ENCODE measurements at regions of chr7 and their contacts with region 1.

Region 1: GRCh38 chr7:120272261-120272660 is 714 bp upstream of the KCND2 start:
- DNase-seq: peak; percentile 51
- H3K4me3 Mint-ChIP-seq: peak overlapping the region; percentile 43
- H3K27ac Mint-ChIP-seq: no peak overlapping the region
- H3K4me1 Mint-ChIP-seq: no peaks in the 10 kb centered on the region
- H3K27me3 Mint-ChIP-seq: peaks cover 72% of the 10 kb centered on the region
- CTCF ChIP-seq: peak; percentile 57

Region 2: DNA sequence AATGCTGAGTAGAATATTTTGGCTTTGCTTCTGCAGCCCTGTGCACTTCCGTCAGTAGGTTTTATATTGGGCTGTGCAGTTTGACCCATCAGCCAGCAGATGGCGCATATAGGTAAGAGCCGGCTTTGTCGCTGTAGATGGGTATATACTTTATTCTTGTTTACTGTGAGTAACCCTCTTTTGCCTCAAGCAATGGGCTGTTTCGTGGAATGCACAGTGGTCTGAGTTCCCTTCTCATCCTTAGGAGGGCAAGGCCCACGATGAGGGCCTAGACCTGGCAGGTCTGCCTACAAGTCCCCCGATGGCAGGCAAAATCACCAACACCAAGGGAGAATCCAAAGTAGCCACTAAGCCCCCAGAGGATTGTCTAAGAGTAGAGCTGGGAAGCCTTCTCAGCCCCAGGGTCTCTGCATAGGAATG is 1002.2 kb before region 1 on chr7:
- CTCF ChIA-PET with region 1: interaction called, 3 read pairs
- POLR2A ChIA-PET with region 1: no interaction called
- intact Hi-C with region 1: loop called (anchors 1 kb)
- DNase-seq: peak; percentile 71
- H3K4me3 Mint-ChIP-seq: no peak overlapping the region
- H3K27ac Mint-ChIP-seq: no peak overlapping the region
- H3K4me1 Mint-ChIP-seq: no peaks in the 10 kb centered on the region
- H3K27me3 Mint-ChIP-seq: peaks cover 57% of the 10 kb centered on the region
- CTCF ChIP-seq: peak; percentile 80

Measured in MCF 10A (cell line).